ENCODE measurements at regions of chr22 and their contacts with region 1.

Region 1: DNA sequence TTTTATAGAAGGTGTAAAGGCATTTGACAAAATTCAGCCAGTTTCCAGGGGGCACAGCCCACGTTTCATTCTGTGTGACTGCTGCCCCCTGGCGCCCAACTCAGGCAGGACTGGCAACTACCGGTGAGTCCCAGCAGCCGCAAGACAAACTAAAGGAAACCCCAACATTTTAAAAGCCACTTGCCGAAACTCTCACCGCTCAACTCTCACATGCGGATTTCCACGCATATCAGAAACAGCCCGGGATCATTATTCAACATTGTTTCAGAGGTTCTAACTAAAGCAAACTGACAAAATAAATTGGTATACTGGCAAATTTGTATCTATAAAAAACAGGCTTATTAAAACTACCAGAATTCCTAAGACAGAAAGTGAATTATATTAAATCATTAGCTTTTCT is 48.2 kb downstream of the MORC2 start:
- ATAC-seq: peak; percentile 51 to 82 (median 64)
- H3K4me3 ChIP-seq: no peak overlapping the region
- H3K27ac ChIP-seq: no peak overlapping the region
- H3K4me1 ChIP-seq: no peaks in the 10 kb centered on the region

Region 2: GRCh38 chr22:30667494-30668385 is 252.7 kb before region 1 on chr22 and contains the start of gene DUSP18:
- in situ Hi-C with region 1: loop called in 1 of 9 experiments (anchors 25 kb)
- ATAC-seq: peak; percentile 95 to 98 (median 97)
- H3K4me3 ChIP-seq: peak within 1 kb of the TSS; percentile 43 to 72 (median 54)
- H3K27ac ChIP-seq: peak within 1 kb of the TSS; percentile 0 to 6
- H3K4me1 ChIP-seq: peaks cover 3 to 7% of the 10 kb centered on the region in 2 donors
- total RNA-seq, gene DUSP18: 1.0 to 23.2 (median 4.4) TPM

Region 3: GRCh38 chr22:30754971-30755756 is 165.2 kb before region 1 on chr22:
- in situ Hi-C with region 1: loop called in 4 of 9 experiments (anchors 10 to 25 kb)
- ATAC-seq: peak; percentile 72 to 99 (median 85)
- H3K4me3 ChIP-seq: no peak overlapping the region
- H3K27ac ChIP-seq: no peak overlapping the region
- H3K4me1 ChIP-seq: no peaks in the 10 kb centered on the region

Region 4: GRCh38 chr22:30763815-30764686 is 156.4 kb before region 1 on chr22:
- in situ Hi-C with region 1: loop called in 4 of 9 experiments (anchors 10 to 25 kb)
- ATAC-seq: peak; percentile 74 to 92 (median 86)
- H3K4me3 ChIP-seq: no peak overlapping the region
- H3K27ac ChIP-seq: no peak overlapping the region
- H3K4me1 ChIP-seq: peaks cover 7 to 13% of the 10 kb centered on the region in 2 donors